ENCODE measurements at regions of chr17 and their contacts with region 1.

Region 1: DNA sequence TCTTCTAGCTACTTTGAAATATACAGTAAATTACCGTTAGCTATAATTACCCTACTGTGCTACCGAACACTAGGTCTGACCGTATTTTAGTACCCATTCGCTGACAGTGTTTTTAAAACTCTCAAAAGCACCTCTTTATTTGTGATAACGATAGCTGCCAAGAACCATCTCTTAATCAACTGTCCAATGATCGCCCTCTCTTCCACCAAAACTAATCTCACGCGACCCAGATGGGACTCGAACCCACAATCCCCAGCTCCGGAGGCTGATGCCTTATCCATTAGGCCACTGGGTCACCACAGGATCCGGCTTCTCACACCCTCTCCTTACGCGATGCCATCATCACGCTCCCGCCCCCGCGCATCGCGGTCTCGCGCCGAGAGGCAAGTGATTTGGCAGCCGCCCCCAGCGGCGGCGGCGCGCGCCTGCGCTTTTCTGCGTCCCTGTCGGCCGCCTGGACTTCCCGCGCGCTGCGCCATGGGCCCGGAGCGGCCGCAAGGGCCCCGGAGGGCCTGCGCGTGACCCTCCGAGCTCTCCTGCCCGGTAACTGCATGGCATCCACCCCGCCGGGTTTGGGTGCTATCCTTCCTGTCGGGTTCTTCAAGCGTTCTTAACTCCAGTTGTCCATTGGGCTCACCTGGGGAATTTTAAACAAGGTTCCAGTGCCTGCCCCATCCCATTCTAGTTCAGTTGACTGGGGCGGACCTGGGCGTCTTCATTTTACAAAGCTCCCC is 15.7 kb upstream of the KPNA2 start:
- DNase-seq: peak; percentile 89 to 96 (median 92)
- H3K4me3 ChIP-seq: peak overlapping the region; percentile 61
- H3K4me3 Mint-ChIP-seq: peak overlapping the region; percentile 84 to 92 (median 86)
- H3K27ac ChIP-seq: peak overlapping the region; percentile 57
- H3K27ac Mint-ChIP-seq: peak overlapping the region; percentile 74 to 97 (median 92)
- H3K4me1 ChIP-seq: peaks cover 9% of the 10 kb centered on the region
- H3K4me1 Mint-ChIP-seq: peaks cover 15 to 24% (median 21%) of the 10 kb centered on the region in 3 donors
- H3K27me3 ChIP-seq: no peaks in the 10 kb centered on the region
- H3K27me3 Mint-ChIP-seq: peaks cover 0 to 7% of the 10 kb centered on the region in 2 donors

Region 2: GRCh38 chr17:67947325-67947813 is 72.5 kb before region 1 on chr17:
- CTCF ChIA-PET with region 1: no interaction called
- POLR2A ChIA-PET with region 1: no interaction called
- DNase-seq: no peak
- H3K4me3 ChIP-seq: no peak overlapping the region
- H3K4me3 Mint-ChIP-seq: no peak overlapping the region
- H3K27ac ChIP-seq: no peak overlapping the region
- H3K27ac Mint-ChIP-seq: peak overlapping the region in 1 of 8 donors; percentile 9
- H3K4me1 ChIP-seq: no peaks in the 10 kb centered on the region
- H3K4me1 Mint-ChIP-seq: no peaks in the 10 kb centered on the region
- H3K27me3 ChIP-seq: no peaks in the 10 kb centered on the region
- H3K27me3 Mint-ChIP-seq: no peaks in the 10 kb centered on the region

Region 3: DNA sequence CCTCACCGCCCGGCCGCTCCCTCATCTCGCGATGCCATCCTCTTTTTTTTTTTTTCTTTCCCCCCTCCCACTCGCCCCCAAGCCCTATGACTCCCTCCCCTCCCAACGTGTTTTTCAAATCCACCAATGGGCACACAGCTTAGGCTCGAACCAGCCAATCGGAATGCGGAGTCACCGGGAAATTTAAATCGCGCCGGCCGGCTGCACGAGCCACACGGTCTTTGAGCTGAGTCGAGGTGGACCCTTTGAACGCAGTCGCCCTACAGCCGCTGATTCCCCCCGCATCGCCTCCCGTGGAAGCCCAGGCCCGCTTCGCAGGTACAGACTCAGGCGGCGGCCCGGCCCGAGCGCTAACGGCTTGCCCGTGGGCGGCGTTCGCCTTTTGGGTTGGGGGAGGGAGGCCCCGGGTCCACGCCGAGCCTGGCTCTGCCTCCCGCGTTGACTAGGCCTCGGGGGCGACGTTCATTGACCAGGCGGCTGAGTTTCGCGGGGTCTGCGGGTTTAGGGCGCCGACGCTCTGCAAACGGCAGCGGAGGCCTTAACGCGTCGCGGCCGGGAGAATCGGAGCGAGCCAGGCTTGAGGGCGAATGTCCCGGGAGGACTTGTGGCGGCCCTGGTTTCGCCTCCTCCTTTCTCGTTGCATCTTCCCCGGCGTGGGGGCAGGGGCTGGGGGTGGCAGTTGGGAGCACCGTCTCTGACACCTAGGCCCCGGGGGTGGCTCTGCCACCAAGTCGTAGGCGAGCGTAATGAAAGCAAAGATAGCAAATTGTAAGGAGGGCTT is 15.9 kb after region 1 on chr17 and contains the start of gene KPNA2:
- CTCF ChIA-PET with region 1: interaction called, 13 read pairs
- POLR2A ChIA-PET with region 1: interaction called, 5 read pairs
- DNase-seq: peak; percentile 87 to 96 (median 92)
- H3K4me3 ChIP-seq: peak within 1 kb of the TSS; percentile 94
- H3K4me3 Mint-ChIP-seq: peak within 1 kb of the TSS; percentile 88 to 97 (median 94)
- H3K27ac ChIP-seq: peak within 1 kb of the TSS; percentile 89
- H3K27ac Mint-ChIP-seq: peak within 1 kb of the TSS; percentile 91 to 98 (median 94)
- H3K4me1 ChIP-seq: peaks cover 9% of the 10 kb centered on the region
- H3K4me1 Mint-ChIP-seq: peaks cover 10 to 19% (median 18%) of the 10 kb centered on the region in 3 donors
- H3K27me3 ChIP-seq: no peaks in the 10 kb centered on the region
- H3K27me3 Mint-ChIP-seq: peaks cover 0 to 5% of the 10 kb centered on the region in 2 donors
- total RNA-seq, gene KPNA2: 213 to 223 TPM

Measured in CD8-positive, alpha-beta memory T cell (primary cell).